Breast epithelium (tissue), 4 donors: ENCODE measurements at regions of chr11 and their contacts with region 1.

Region 1: GRCh38 chr11:64165849-64166635 is at the start of gene MACROD1:
- DNase-seq: peak; percentile 91 to 95
- H3K4me3 ChIP-seq: peak within 1 kb of the TSS; percentile 73 to 93 (median 85)
- H3K27ac ChIP-seq: peak within 1 kb of the TSS; percentile 79 to 92
- H3K4me1 ChIP-seq: peaks cover 0 to 4% of the 10 kb centered on the region in 2 donors
- H3K27me3 ChIP-seq: no peaks in the 10 kb centered on the region
- CTCF ChIP-seq: no peak
- POLR2A ChIP-seq: no peak
- total RNA-seq, gene MACROD1: 19.7 to 113 (median 40.3) TPM

Region 2: DNA sequence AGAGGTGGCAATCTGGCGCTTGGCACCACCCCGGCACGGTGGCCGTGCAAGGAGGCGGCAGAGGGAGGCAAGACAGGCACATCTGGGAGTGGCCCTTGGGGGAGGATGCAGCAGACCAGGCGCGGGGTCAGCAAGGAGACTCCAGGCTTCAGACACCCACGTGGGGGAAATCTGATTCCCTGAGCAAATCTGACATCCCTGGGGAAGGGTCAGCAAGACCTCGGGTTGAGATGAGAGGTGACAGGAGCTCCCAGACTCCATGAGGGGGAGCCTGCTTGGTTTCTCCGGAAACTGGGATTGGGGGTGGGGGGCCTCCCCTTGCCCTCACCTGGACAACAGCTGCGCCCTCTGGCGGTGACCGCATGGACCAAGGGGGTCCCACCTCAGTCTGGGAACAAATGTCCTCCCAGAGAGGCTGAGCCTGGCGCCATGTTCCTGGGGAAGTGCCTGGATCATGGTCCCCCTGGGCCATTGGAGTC is 245.1 kb before region 1 on chr11:
- intact Hi-C with region 1: loop called (anchors 5 kb)
- DNase-seq: no peak
- H3K4me3 ChIP-seq: no peak overlapping the region
- H3K27ac ChIP-seq: peak overlapping the region; percentile 82 to 83
- H3K4me1 ChIP-seq: peaks cover 4 to 29% of the 10 kb centered on the region in 2 donors
- H3K27me3 ChIP-seq: no peaks in the 10 kb centered on the region
- CTCF ChIP-seq: peak in 1 of 3 donors; percentile 13
- POLR2A ChIP-seq: no peak